ENCODE measurements at regions of chr10 and their contacts with region 1.

Region 1: DNA sequence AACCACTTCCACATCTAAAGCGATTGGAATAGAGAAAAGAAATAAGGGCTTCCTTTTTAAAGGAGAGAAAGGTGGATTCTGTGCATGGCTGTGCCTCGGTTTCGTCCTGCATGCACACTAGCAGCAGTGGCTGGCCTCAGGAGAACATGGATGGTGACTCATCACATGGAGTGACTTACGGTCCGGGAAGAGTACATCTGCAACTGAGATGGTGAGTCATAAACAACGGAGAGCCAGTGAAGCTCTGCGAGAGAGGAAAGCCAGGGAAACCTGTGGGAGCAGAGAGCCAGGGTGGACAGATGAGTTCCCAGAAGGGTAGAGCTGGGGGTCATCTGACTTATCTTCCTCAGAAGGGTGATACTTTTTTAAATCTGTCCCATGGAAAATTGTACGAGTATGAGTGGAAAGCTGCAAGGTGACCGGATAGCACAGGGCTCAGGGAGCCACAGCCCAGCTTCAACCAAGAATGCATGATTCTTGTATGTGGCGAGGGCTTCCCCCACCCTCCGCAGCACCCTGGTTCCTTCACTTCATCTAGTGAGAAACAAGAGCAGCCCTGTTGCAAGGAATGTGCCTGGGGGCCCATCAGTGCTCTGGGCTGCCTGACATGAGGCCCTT is 259.1 kb downstream of the KLF6 start:
- DNase-seq: no peak

Region 2: DNA sequence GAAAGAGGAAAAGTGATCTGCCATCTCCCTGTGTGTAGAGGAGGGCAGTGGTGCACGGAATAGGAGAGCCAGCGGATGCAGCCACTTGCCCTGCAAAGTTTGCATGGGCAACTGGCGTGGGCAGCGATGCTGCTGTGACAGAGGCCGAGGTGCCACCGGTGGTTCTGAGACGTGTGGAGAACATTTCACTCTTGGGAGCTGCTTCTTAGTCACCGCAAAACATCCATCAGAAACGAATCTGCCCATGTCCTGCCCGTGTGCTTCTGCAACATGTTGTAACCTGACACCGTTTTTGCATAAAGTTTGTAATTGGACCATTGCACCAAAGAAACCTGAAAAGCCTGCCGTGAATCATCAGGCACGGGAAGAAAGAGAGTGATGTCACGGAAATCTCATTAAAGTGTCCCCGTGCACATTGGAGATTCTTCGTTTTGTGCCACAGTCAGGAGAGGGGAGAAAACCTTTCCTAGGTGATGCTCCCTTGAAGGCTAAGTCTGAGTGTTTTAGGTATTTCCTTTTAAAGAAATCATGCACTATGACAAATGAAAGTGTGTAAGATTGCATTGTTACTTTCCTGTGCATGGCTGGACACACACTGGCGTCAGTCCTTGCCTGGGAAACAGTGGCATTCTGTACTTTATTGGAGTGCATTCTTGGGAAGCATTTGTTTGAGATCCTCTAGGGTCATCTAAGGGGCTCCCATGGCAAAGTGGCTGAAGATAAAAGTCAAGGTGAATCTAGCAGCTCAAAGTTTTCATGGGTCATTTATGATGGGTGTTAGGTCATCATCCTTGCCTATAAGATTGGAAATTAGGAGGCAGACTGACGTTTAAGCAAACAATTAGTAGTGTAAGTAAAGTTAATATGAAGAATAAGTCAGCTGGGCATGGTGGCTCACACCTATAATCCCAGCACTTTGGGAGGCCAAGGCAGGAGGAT is 43.5 kb before region 1 on chr10:
- intact Hi-C with region 1: loop called in 1 of 2 experiments (anchors 5 kb)
- DNase-seq: no peak

Region 3: GRCh38 chr10:3655528-3655927 is 129.6 kb after region 1 on chr10:
- intact Hi-C with region 1: no loop called
- DNase-seq: no peak